Caco-2 (cell line): ENCODE measurements at regions of chr9 and their contacts with region 1.

Region 1: DNA sequence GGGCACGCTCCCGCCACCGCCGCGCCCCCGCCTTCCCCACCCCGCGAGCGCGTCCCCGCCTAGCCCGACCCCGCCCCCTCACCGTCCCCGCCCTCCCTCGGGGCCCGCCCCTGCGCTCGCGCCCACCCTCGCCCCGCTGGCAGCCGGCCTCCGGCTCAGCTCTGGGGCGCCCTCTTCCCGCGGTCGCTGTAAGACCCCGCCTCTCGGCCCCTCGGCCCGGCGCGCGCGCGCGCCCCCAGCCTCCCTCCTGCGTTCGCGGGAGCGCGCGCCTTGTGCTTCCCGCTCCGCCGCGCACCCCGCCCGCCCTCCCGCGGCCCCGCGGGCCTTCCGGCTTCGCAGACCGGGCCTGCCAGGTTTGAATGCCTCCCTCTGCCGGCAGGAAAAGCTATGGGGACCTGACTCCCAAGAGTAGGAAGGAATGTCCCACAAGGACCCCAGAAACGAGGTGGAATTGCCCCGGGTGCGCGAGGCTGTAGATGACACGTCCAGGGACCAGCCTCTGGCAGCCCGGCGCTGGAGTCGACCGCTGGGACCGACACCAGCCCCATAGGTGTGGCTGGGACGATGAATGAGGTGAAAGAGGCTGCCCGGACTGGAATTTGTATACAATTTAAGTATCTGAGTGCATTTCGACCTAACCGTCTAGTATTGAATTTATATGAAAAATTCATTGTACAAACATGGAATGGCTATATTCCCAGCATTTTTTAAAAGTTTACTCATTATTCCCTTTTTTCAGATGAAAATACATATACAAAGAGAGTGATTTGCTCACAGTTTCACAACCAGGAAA is 416 bp upstream of the PTBP3 start:
- DNase-seq: peak; percentile 94 to 95
- H3K4me3 ChIP-seq: peak overlapping the region; percentile 94
- H3K4me3 Mint-ChIP-seq: peak overlapping the region; percentile 88
- H3K27ac Mint-ChIP-seq: peak overlapping the region; percentile 95
- H3K4me1 ChIP-seq: peaks cover 39% of the 10 kb centered on the region
- H3K4me1 Mint-ChIP-seq: peaks cover 27% of the 10 kb centered on the region
- H3K27me3 ChIP-seq: no peaks in the 10 kb centered on the region
- H3K27me3 Mint-ChIP-seq: no peaks in the 10 kb centered on the region
- CTCF ChIP-seq: peak; percentile 52 to 66

Region 2: DNA sequence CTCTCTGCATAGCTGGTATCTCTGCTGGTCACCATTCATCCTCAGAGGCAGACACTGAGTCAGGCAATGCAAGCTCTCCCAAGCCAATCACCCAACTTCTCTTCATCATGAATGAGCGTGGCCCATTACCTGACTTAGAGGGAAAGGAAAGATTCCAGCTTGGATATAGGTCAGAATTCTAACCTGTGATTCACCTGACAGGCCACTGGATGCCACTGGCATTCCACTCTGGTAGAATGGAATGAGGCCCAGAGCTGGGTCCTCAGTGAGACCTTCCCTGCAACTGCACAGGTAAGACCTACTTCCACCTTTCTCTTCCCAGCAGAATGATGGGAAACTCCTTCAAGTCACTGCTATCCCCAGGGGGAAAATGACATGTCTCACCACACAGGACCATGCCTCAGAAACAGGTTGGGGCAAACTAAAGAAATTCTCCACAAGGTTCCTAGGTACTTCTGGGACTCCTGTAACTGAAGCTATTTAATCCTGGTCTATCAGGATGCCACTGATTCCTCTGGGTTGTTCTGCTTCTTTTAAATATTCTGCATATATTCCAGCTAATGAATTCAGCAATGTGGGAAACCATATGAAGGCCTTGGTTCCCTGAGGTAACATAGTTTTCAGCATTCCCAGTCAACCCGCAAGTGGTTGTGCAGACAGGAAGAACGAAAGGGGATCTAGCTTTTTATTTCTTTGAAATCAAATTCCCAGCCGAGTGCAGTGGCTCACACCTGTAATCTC is 220.7 kb before region 1 on chr9:
- CTCF ChIA-PET with region 1: interaction called, 23 read pairs
- POLR2A ChIA-PET with region 1: no interaction called
- intact Hi-C with region 1: loop called (anchors 1 kb)
- DNase-seq: peak; percentile 78 to 80
- H3K4me3 ChIP-seq: no peak overlapping the region
- H3K4me3 Mint-ChIP-seq: no peak overlapping the region
- H3K27ac Mint-ChIP-seq: peak overlapping the region; percentile 53
- H3K4me1 ChIP-seq: peaks cover 39% of the 10 kb centered on the region
- H3K4me1 Mint-ChIP-seq: peaks cover 32% of the 10 kb centered on the region
- H3K27me3 ChIP-seq: no peaks in the 10 kb centered on the region
- H3K27me3 Mint-ChIP-seq: no peaks in the 10 kb centered on the region
- CTCF ChIP-seq: peak; percentile 80 to 81

Region 3: GRCh38 chr9:112166172-112167140 is 167.4 kb before region 1 on chr9:
- CTCF ChIA-PET with region 1: no interaction called
- POLR2A ChIA-PET with region 1: no interaction called
- intact Hi-C with region 1: loop called (anchors 1 kb)
- DNase-seq: peak; percentile 59 to 68
- H3K4me3 ChIP-seq: no peak overlapping the region
- H3K4me3 Mint-ChIP-seq: no peak overlapping the region
- H3K27ac Mint-ChIP-seq: peak overlapping the region; percentile 83
- H3K4me1 ChIP-seq: peaks cover 93% of the 10 kb centered on the region
- H3K4me1 Mint-ChIP-seq: peaks cover 49% of the 10 kb centered on the region
- H3K27me3 ChIP-seq: no peaks in the 10 kb centered on the region
- H3K27me3 Mint-ChIP-seq: no peaks in the 10 kb centered on the region
- CTCF ChIP-seq: peak; percentile 23 to 63

Region 4: DNA sequence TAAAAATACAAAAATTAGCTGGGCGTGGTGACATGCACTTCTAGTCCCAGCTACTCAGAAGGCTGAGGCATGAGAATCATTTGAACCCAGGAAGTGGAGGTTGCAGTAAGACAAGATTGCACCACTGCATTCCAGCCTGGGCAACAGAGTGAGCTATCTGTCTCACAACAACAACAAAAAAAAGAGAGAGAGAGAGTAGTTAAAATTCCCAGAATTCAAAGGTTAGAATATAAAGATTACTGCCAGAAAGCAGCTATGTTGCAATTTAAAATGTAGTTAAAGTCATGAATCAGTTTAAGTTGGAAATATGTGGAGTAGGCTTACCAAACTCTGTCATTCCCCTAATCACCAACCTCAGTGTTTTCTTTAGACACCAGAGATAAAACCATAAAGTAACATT is 100.1 kb before region 1 on chr9:
- CTCF ChIA-PET with region 1: no interaction called
- POLR2A ChIA-PET with region 1: no interaction called
- intact Hi-C with region 1: loop called (anchors 5 kb)
- DNase-seq: peak in 1 of 2 experiments; percentile 23
- H3K4me3 ChIP-seq: no peak overlapping the region
- H3K4me3 Mint-ChIP-seq: no peak overlapping the region
- H3K27ac Mint-ChIP-seq: no peak overlapping the region
- H3K4me1 ChIP-seq: peaks cover 10% of the 10 kb centered on the region
- H3K4me1 Mint-ChIP-seq: no peaks in the 10 kb centered on the region
- H3K27me3 ChIP-seq: no peaks in the 10 kb centered on the region
- H3K27me3 Mint-ChIP-seq: no peaks in the 10 kb centered on the region
- CTCF ChIP-seq: no peak

Region 5: DNA sequence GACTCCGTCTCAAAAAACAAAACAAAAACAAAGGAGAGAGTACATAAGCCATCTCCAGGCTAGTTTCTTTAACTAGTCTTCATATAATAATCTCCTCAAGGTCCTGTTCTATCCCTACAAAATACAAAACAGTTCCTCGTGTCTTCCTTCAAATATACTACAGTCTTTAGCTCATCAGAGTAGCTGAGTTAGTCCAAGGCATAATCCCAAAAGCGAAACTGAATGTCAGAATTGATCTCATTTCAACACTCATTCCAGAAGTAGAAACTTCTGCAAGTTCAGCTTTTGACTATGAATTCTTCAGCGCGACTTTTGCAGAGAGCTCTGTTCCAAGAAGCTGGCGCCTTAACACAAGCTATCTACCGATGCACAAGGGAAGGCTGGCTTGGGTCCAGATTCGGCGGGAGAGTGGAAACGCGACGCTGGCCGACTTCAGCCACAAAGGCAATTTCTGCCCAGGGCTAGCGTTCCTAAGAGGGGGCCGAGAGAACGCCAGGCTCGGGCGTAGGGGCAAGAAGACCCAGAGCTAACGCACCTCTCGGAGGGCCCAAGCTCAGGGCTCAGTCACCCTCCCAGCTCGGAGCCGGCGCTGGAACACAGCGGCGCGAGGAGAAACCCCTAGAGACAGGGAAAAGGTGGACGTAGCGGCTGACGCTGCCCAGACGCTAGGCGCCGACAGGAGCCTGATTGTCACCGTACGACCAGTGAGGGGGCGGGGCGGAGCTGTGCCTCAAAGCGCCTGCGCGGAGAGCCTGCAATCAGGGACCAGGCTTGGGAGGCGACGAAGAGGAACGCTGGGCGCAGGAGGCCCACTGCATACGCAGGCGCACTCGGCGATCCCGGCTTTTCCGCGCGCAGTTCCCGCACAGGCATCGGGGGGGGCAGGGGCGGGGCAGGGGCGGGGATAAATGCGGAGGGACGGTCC is 45.6 kb after region 1 on chr9:
- CTCF ChIA-PET with region 1: interaction called, 7 read pairs
- POLR2A ChIA-PET with region 1: interaction called, 10 read pairs
- intact Hi-C with region 1: no loop called
- DNase-seq: peak; percentile 99
- H3K4me3 ChIP-seq: peak overlapping the region; percentile 81
- H3K4me3 Mint-ChIP-seq: peak overlapping the region; percentile 99
- H3K27ac Mint-ChIP-seq: peak overlapping the region; percentile 98
- H3K4me1 ChIP-seq: peaks cover 44% of the 10 kb centered on the region
- H3K4me1 Mint-ChIP-seq: peaks cover 35% of the 10 kb centered on the region
- H3K27me3 ChIP-seq: no peaks in the 10 kb centered on the region
- H3K27me3 Mint-ChIP-seq: no peaks in the 10 kb centered on the region
- CTCF ChIP-seq: peak in 1 of 2 experiments; percentile 3

Region 6: GRCh38 chr9:112396416-112396815 is 62.6 kb after region 1 on chr9:
- CTCF ChIA-PET with region 1: no interaction called
- POLR2A ChIA-PET with region 1: no interaction called
- intact Hi-C with region 1: no loop called
- DNase-seq: no peak
- H3K4me3 ChIP-seq: no peak overlapping the region
- H3K4me3 Mint-ChIP-seq: no peak overlapping the region
- H3K27ac Mint-ChIP-seq: peak overlapping the region; percentile 12
- H3K4me1 ChIP-seq: peaks cover 16% of the 10 kb centered on the region
- H3K4me1 Mint-ChIP-seq: peaks cover 38% of the 10 kb centered on the region
- H3K27me3 ChIP-seq: no peaks in the 10 kb centered on the region
- H3K27me3 Mint-ChIP-seq: no peaks in the 10 kb centered on the region
- CTCF ChIP-seq: no peak